ENCODE measurements at regions of chr20 and their contacts with region 1.

Region 1: GRCh38 chr20:54093423-54094267 is 23.3 kb upstream of the BCAS1 start:
- DNase-seq: no peak
- ATAC-seq: no peak
- H3K4me3 ChIP-seq: no peak overlapping the region
- H3K27ac ChIP-seq: peak overlapping the region in 1 of 2 experiments; percentile 0; a peak in 1 of 6 replicates
- H3K4me1 ChIP-seq: peaks cover 24% of the 10 kb centered on the region
- CTCF ChIP-seq: no peak
- EP300 ChIP-seq: no peak
- POLR2A ChIP-seq: no peak
- RAD21 ChIP-seq: no peak

Region 2: DNA sequence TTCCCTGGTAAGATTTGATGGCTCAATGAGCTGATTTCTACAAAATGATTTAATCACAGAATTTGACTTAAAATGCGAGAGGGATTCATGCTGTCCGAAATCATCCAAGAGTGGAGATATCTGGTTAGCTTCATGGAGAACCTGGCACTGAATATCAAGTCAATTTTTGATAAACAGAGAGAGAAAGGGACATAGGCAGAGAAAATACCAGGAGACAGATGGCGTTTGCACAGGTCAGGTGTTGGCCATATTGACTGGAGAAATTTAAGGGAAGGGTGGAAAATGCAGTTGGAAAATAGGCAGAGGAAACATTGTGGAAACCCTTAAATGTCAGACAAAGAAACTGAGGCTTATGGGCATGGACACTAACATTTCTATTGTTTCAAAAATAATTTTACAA is 70.2 kb before region 1 on chr20:
- CTCF ChIA-PET with region 1: no interaction called
- POLR2A ChIA-PET with region 1: no interaction called
- DNase-seq: no peak
- ATAC-seq: no peak
- H3K4me3 ChIP-seq: no peak overlapping the region
- H3K27ac ChIP-seq: no peak overlapping the region
- H3K4me1 ChIP-seq: no peaks in the 10 kb centered on the region
- CTCF ChIP-seq: no peak
- EP300 ChIP-seq: no peak
- POLR2A ChIP-seq: no peak
- RAD21 ChIP-seq: no peak

Region 3: DNA sequence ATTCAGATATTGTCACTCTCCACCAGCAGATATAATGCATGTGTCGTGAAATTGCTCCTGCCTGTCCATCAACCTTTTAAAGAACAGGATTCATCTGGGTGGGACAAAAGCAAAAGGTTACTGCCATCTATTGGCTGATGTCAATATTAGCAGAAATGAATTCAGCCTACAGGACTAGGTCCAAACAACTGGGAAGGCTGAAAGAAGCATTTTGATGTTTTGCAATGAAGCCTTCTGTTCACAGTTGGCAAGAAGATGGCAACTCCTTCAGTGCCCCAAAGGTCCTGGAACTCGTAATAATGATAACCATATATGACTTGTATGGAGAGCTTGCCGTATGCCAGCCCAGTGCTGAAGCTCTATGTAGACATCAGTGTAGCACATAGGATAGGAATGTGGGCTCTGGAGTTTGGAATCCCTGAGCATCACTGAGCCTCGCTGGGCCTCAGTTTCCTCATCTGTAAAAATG is 30.8 kb before region 1 on chr20:
- CTCF ChIA-PET with region 1: interaction called, 25 read pairs
- POLR2A ChIA-PET with region 1: interaction called, 3 read pairs
- DNase-seq: peak; percentile 62 to 76
- ATAC-seq: peak; percentile 77 to 82
- H3K4me3 ChIP-seq: no peak overlapping the region
- H3K27ac ChIP-seq: peak overlapping the region in 1 of 2 experiments; percentile 27; a peak in 3 of 6 replicates
- H3K4me1 ChIP-seq: peaks cover 47% of the 10 kb centered on the region
- CTCF ChIP-seq: peak; percentile 88
- EP300 ChIP-seq: no peak
- POLR2A ChIP-seq: no peak
- RAD21 ChIP-seq: peak; percentile 85 to 90

Region 4: DNA sequence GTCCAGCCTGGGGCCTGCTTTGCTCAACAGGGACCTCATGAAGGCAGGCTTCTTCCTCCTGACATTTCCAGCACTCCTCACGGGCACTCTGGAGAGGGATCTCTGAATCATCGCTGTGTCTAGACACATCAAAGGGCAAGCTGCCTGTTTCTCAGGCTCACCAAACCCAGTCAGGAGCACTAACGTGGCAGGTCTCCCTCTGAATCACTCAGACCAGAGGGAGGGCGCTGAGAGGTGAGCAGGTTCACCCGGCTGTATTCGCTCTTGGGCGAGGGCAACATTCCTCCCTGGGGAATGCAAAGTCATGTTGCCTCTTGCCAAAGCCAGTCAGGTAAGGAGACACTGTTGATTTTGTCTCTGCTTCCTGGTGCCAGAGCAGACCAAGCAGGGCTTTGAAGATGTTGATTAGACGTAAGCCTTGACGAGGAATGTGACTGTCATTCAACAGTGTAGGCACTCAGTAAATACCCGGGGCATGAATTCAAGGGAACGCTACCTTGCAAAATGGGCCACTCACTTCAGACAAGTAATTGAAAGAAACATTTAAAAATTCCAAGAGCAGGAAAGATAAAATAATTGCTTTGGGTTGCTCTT is 30.0 kb after region 1 on chr20:
- CTCF ChIA-PET with region 1: interaction called, 11 read pairs
- POLR2A ChIA-PET with region 1: interaction called, 3 read pairs
- DNase-seq: peak; percentile 93 to 100
- ATAC-seq: peak; percentile 95 to 98
- H3K4me3 ChIP-seq: no peak overlapping the region
- H3K27ac ChIP-seq: peak overlapping the region; percentile 96 to 98
- H3K4me1 ChIP-seq: peaks cover 86% of the 10 kb centered on the region
- CTCF ChIP-seq: no peak
- EP300 ChIP-seq: peak; percentile 100
- POLR2A ChIP-seq: no peak
- RAD21 ChIP-seq: peak; percentile 44 to 60

Region 5: GRCh38 chr20:54148947-54149503 is 55.4 kb after region 1 on chr20:
- CTCF ChIA-PET with region 1: interaction called, 24 read pairs
- POLR2A ChIA-PET with region 1: interaction called, 24 read pairs
- DNase-seq: peak; percentile 88 to 99
- ATAC-seq: peak; percentile 52 to 67
- H3K4me3 ChIP-seq: no peak overlapping the region
- H3K27ac ChIP-seq: peak overlapping the region; percentile 86 to 93
- H3K4me1 ChIP-seq: peaks cover 80% of the 10 kb centered on the region
- CTCF ChIP-seq: no peak
- EP300 ChIP-seq: peak; percentile 80 to 89; a peak in 4 of 5 replicates
- POLR2A ChIP-seq: no peak
- RAD21 ChIP-seq: peak in 1 of 2 experiments; percentile 43; a peak in 2 of 5 replicates

Region 6: GRCh38 chr20:54167909-54168872 is 74.5 kb after region 1 on chr20:
- CTCF ChIA-PET with region 1: interaction called, 37 read pairs
- POLR2A ChIA-PET with region 1: interaction called, 6 read pairs
- DNase-seq: peak; percentile 57 to 92
- ATAC-seq: peak; percentile 40 to 75
- H3K4me3 ChIP-seq: peak overlapping the region; percentile 83
- H3K27ac ChIP-seq: peak overlapping the region; percentile 93 to 100
- H3K4me1 ChIP-seq: peaks cover 55% of the 10 kb centered on the region
- CTCF ChIP-seq: no peak
- EP300 ChIP-seq: no peak
- POLR2A ChIP-seq: peak; percentile 21; the same call in 1 of the 2 replicates
- RAD21 ChIP-seq: no peak

Region 7: GRCh38 chr20:54368557-54368956 is 274.9 kb after region 1 on chr20:
- CTCF ChIA-PET with region 1: no interaction called
- POLR2A ChIA-PET with region 1: no interaction called
- DNase-seq: no peak
- ATAC-seq: no peak
- H3K4me3 ChIP-seq: no peak overlapping the region
- H3K27ac ChIP-seq: no peak overlapping the region
- H3K4me1 ChIP-seq: peaks cover 6% of the 10 kb centered on the region; the same call in 2 of the 3 replicates
- CTCF ChIP-seq: no peak
- EP300 ChIP-seq: no peak
- POLR2A ChIP-seq: no peak
- RAD21 ChIP-seq: no peak